ENCODE measurements at regions of chr12 and their contacts with region 1.

Region 1: GRCh38 chr12:54734196-54734950 is 86.2 kb upstream of the DCD start:
- DNase-seq: no peak
- H3K4me3 ChIP-seq: no peak overlapping the region
- H3K27ac ChIP-seq: no peak overlapping the region
- H3K27me3 ChIP-seq: no peaks in the 10 kb centered on the region
- CTCF ChIP-seq: no peak

Region 2: DNA sequence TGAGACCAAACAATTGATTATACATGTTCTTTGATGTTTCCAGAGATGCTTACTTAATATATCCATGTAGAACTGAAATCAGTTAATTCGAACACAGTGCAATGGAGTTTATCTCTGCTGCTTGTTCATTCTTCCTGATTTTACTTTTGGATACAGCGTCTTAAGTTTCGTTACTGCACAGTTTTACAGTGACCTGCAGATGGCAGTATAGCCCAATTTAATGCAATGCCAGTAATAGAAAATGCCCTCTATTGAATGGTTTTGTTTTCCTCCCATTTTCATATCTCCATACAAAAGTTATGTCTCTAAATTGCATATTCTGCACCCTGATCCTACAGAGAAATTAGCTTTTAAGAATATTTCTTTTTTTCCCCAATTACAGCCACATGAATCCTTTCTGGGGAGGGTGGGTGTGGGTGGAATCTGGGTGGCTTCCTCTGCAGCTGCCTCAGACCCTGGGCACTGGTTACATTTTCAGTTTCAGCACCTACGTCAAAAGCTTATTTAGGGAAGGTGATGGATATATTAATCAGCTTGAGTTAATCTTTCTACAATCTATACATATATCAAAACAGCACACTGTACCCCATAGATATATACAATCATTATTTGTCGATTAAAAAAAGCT is 14.9 kb after region 1 on chr12:
- CTCF ChIA-PET with region 1: interaction called, 10 read pairs
- POLR2A ChIA-PET with region 1: no interaction called
- DNase-seq: peak; percentile 15
- H3K4me3 ChIP-seq: no peak overlapping the region
- H3K27ac ChIP-seq: no peak overlapping the region
- H3K27me3 ChIP-seq: no peaks in the 10 kb centered on the region
- CTCF ChIP-seq: peak; percentile 75

Region 3: DNA sequence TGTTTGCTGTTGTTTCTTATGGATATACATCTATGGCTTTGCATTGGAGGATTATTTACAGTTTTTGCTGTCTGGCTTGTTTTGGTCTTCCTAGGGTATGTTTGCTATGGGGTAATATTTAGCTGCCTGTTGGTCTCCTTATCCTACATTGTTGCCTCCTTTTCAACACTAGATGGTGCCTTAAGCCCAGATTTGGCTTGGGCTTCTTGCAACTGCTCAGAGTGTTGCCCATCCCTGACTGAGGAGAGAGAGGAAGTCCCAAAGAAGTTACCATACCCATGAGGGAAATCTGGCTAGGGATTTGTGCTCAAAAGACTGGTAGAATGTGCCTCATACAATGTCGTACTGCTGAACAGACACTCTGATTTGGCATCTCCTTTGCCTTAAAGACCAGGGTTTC is 25.4 kb after region 1 on chr12:
- CTCF ChIA-PET with region 1: no interaction called
- POLR2A ChIA-PET with region 1: no interaction called
- DNase-seq: no peak
- H3K4me3 ChIP-seq: no peak overlapping the region
- H3K27ac ChIP-seq: no peak overlapping the region
- H3K27me3 ChIP-seq: no peaks in the 10 kb centered on the region
- CTCF ChIP-seq: peak; percentile 27

Measured in AG04450 (cell line).